ENCODE measurements at regions of chr7 and their contacts with region 1.

Region 1: DNA sequence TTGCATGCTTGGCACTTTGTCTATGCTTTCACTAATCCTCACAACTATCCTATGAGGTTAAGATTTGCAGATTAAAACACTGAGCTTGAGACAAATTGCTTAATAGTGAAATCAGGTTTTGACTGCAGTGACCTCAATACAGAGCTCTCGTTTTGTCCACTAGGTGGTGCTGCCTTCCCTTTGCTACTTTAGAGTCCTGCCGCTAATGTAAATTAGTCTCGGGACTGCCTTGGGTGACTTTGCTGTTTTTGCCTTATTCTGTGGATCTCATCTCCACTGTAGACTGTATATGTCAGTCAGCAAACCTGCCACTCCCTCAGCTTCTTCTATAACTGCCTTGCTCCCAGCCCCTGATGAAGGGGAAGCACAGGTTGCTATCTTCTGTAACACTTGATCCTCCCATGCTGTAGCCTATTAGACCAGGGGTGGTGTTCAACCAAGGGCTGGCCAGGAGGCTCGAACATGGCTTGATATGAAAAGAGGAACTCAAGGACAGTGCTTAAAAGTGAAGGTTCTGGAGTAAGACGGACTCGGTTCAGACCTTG is 26.0 kb downstream of the ASB4 start:
- DNase-seq: no peak
- ATAC-seq: peak; percentile 95
- H3K4me3 ChIP-seq: no peak overlapping the region
- H3K27ac ChIP-seq: no peak overlapping the region
- H3K4me1 ChIP-seq: no peaks in the 10 kb centered on the region
- H3K27me3 ChIP-seq: no peaks in the 10 kb centered on the region
- CTCF ChIP-seq: peak; percentile 78 to 88 (median 83)
- EP300 ChIP-seq: no peak
- POLR2A ChIP-seq: no peak
- RAD21 ChIP-seq: peak; percentile 72

Region 2: GRCh38 chr7:95491634-95492320 is 20.0 kb before region 1 on chr7:
- CTCF ChIA-PET with region 1: interaction called, 77 read pairs
- POLR2A ChIA-PET with region 1: interaction called, 3 read pairs
- RAD21 ChIA-PET with region 1: interaction called, 17 read pairs
- SMC1A ChIA-PET with region 1: interaction called, 38 read pairs
- in situ Hi-C with region 1: no loop called
- intact Hi-C with region 1: no loop called
- DNase-seq: no peak
- ATAC-seq: no peak
- H3K4me3 ChIP-seq: no peak overlapping the region
- H3K27ac ChIP-seq: no peak overlapping the region
- H3K4me1 ChIP-seq: no peaks in the 10 kb centered on the region
- H3K27me3 ChIP-seq: no peaks in the 10 kb centered on the region
- CTCF ChIP-seq: no peak
- EP300 ChIP-seq: no peak
- POLR2A ChIP-seq: no peak
- RAD21 ChIP-seq: no peak

Region 3: GRCh38 chr7:95527033-95527775 is 15.4 kb after region 1 on chr7:
- CTCF ChIA-PET with region 1: interaction called, 163 read pairs
- POLR2A ChIA-PET with region 1: interaction called, 4 read pairs
- RAD21 ChIA-PET with region 1: interaction called, 113 read pairs
- SMC1A ChIA-PET with region 1: interaction called, 64 read pairs
- in situ Hi-C with region 1: no loop called
- intact Hi-C with region 1: no loop called
- DNase-seq: no peak
- ATAC-seq: peak; percentile 92
- H3K4me3 ChIP-seq: no peak overlapping the region
- H3K27ac ChIP-seq: no peak overlapping the region
- H3K4me1 ChIP-seq: no peaks in the 10 kb centered on the region
- H3K27me3 ChIP-seq: no peaks in the 10 kb centered on the region
- CTCF ChIP-seq: peak; percentile 73 to 83 (median 82)
- EP300 ChIP-seq: no peak
- POLR2A ChIP-seq: no peak
- RAD21 ChIP-seq: peak; percentile 96

Region 4: DNA sequence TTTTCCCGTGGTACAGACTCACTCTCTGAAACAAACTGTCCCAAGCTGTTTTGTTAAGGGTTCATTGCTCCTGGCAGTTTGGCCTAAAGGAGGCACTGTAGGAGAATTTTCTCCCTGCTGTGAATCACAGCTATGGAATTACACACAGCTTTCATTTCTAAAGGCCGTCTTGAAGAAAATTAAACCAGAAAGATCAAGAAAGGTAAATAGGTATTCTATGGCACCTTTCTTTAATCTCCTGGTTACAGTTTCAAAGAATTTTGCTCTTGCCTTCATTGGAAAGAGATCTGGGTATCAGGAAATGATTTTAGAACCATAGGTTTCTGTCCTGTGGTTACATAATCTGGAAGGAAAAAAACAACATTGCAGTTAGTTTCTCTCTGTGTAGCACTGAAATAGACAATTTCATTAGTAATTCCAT is 33.3 kb after region 1 on chr7:
- CTCF ChIA-PET with region 1: interaction called, 23 read pairs
- POLR2A ChIA-PET with region 1: interaction called, 5 read pairs
- RAD21 ChIA-PET with region 1: interaction called, 5 read pairs
- SMC1A ChIA-PET with region 1: interaction called, 10 read pairs
- in situ Hi-C with region 1: no loop called
- intact Hi-C with region 1: no loop called
- DNase-seq: no peak
- ATAC-seq: peak; percentile 47; the same call in 1 of the 3 replicates
- H3K4me3 ChIP-seq: no peak overlapping the region
- H3K27ac ChIP-seq: no peak overlapping the region
- H3K4me1 ChIP-seq: no peaks in the 10 kb centered on the region
- H3K27me3 ChIP-seq: no peaks in the 10 kb centered on the region; a peak in 1 of 4 replicates
- CTCF ChIP-seq: peak; percentile 14 to 38 (median 32); a peak in 4 of 6 replicates
- EP300 ChIP-seq: no peak
- POLR2A ChIP-seq: no peak
- RAD21 ChIP-seq: peak; percentile 48

Region 5: GRCh38 chr7:95628831-95629439 is 117.1 kb after region 1 on chr7:
- CTCF ChIA-PET with region 1: no interaction called
- POLR2A ChIA-PET with region 1: no interaction called
- RAD21 ChIA-PET with region 1: no interaction called
- SMC1A ChIA-PET with region 1: no interaction called
- in situ Hi-C with region 1: no loop called
- intact Hi-C with region 1: no loop called
- DNase-seq: no peak
- ATAC-seq: no peak
- H3K4me3 ChIP-seq: no peak overlapping the region
- H3K27ac ChIP-seq: no peak overlapping the region
- H3K4me1 ChIP-seq: no peaks in the 10 kb centered on the region
- H3K27me3 ChIP-seq: no peaks in the 10 kb centered on the region
- CTCF ChIP-seq: no peak
- EP300 ChIP-seq: no peak
- POLR2A ChIP-seq: no peak
- RAD21 ChIP-seq: no peak

Region 6: GRCh38 chr7:95871078-95871782 is 359.4 kb after region 1 on chr7:
- CTCF ChIA-PET with region 1: interaction called, 31 read pairs
- POLR2A ChIA-PET with region 1: no interaction called
- RAD21 ChIA-PET with region 1: interaction called, 11 read pairs
- SMC1A ChIA-PET with region 1: interaction called, 7 read pairs
- in situ Hi-C with region 1: loop called (anchors 10 kb)
- intact Hi-C with region 1: no loop called
- DNase-seq: no peak
- ATAC-seq: peak; percentile 69
- H3K4me3 ChIP-seq: no peak overlapping the region
- H3K27ac ChIP-seq: no peak overlapping the region
- H3K4me1 ChIP-seq: no peaks in the 10 kb centered on the region
- H3K27me3 ChIP-seq: no peaks in the 10 kb centered on the region
- CTCF ChIP-seq: peak; percentile 55 to 77 (median 63)
- EP300 ChIP-seq: no peak
- POLR2A ChIP-seq: no peak
- RAD21 ChIP-seq: peak; percentile 70